Activated CD8-positive, alpha-beta T cell treated with anti-CD3 and anti-CD28 coated beads for 36 hours (primary cell): ENCODE measurements at regions of chr22 and their contacts with region 1.

Region 1: DNA sequence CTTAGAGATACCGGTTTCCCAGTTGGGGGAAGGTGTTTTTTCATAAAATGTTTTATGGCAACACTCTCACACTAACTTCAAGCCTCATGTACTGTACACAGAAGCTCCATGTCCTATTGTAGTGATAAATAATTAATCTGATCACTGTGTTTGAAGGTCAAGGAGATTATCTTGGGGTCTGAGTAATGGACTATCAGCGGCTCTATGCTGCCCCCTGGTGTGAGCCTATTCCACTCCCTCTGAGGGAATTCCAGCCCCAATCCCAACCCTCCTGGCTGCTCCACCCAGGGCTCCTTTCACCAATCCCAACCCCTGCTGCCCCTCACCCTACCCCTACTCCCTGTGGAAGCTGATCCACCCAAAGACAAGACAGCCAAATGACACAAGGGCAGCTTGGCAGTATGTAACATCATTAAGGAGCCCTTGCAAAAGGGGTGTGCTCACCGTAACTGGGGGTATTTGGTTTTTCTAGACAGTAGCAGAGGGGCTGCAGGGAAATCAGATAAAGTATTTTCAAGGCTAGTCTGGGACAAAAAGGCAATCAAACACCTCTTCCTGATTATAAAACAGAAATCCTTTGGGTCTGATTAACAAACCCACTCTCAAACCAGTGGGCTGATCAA is 22.3 kb downstream of the HPS4 start:
- DNase-seq: peak; percentile 56
- ATAC-seq: peak; percentile 27
- H3K4me3 Mint-ChIP-seq: no peak overlapping the region
- H3K27ac Mint-ChIP-seq: no peak overlapping the region
- H3K4me1 Mint-ChIP-seq: no peaks in the 10 kb centered on the region
- H3K27me3 Mint-ChIP-seq: no peaks in the 10 kb centered on the region
- CTCF ChIP-seq: peak; percentile 80

Region 2: GRCh38 chr22:26336773-26337172 is 124.5 kb before region 1 on chr22:
- CTCF ChIA-PET with region 1: no interaction called
- POLR2A ChIA-PET with region 1: no interaction called
- intact Hi-C with region 1: no loop called
- DNase-seq: no peak
- ATAC-seq: no peak
- H3K4me3 Mint-ChIP-seq: no peak overlapping the region
- H3K27ac Mint-ChIP-seq: no peak overlapping the region
- H3K4me1 Mint-ChIP-seq: no peaks in the 10 kb centered on the region
- H3K27me3 Mint-ChIP-seq: peaks cover 32% of the 10 kb centered on the region
- CTCF ChIP-seq: no peak

Region 3: DNA sequence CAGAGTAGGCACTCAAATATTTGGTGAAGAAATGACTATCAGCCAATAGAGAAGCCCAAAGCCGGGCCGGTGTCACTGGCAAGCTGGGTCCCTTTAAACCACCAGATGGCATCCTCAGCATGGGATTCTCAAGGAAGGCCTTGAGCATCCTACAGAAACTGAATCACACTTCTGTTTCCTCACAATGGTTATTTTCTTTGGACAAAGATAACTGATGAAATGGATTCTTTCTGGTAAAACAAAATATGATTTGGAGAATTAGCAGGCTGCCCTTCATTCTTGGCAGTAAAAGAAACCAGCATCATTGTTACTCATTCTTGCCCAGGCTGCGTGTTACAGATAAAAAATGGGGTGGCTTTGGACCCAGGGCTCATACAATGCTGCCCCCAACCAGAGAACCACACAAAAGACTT is 62.6 kb before region 1 on chr22:
- CTCF ChIA-PET with region 1: interaction called, 56 read pairs
- POLR2A ChIA-PET with region 1: no interaction called
- intact Hi-C with region 1: loop called (anchors 5 kb)
- DNase-seq: peak; percentile 77
- ATAC-seq: peak; percentile 85
- H3K4me3 Mint-ChIP-seq: no peak overlapping the region
- H3K27ac Mint-ChIP-seq: no peak overlapping the region
- H3K4me1 Mint-ChIP-seq: peaks cover 3% of the 10 kb centered on the region
- H3K27me3 Mint-ChIP-seq: peaks cover 8% of the 10 kb centered on the region
- CTCF ChIP-seq: peak; percentile 66

Region 4: DNA sequence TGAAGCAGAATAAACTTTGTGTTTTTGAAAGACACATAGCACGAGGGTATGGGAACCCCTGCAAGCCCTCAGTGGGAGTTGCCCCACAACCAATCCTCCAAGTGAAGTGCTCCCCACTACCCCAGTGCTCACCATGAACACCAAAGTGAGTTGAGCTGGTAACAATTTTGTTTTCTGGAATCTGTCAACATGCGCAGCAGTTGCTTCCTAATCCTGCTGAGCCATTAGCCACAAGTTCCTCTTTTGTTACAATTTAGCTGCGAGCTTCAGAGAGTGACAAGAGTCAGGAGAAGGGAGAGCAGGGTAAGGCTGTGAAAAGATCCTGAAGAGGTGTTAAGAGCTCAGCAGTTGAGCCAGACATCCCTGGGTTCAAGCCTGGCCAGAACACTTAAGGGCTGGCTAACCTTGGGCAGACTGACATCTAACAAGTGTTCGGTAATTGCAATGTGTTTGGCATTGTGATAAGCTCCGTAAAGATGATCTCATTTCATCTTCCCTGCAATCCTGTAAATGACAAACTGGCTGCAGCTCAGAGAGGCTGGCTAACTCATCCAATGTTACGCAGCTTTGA is 56.4 kb before region 1 on chr22:
- CTCF ChIA-PET with region 1: interaction called, 56 read pairs
- POLR2A ChIA-PET with region 1: no interaction called
- intact Hi-C with region 1: no loop called
- DNase-seq: no peak
- ATAC-seq: no peak
- H3K4me3 Mint-ChIP-seq: no peak overlapping the region
- H3K27ac Mint-ChIP-seq: no peak overlapping the region
- H3K4me1 Mint-ChIP-seq: peaks cover 12% of the 10 kb centered on the region
- H3K27me3 Mint-ChIP-seq: peaks cover 6% of the 10 kb centered on the region
- CTCF ChIP-seq: no peak

Region 5: GRCh38 chr22:26445577-26446275 is 15.6 kb before region 1 on chr22:
- CTCF ChIA-PET with region 1: interaction called, 13 read pairs
- POLR2A ChIA-PET with region 1: interaction called, 4 read pairs
- intact Hi-C with region 1: no loop called
- DNase-seq: no peak
- ATAC-seq: no peak
- H3K4me3 Mint-ChIP-seq: no peak overlapping the region
- H3K27ac Mint-ChIP-seq: no peak overlapping the region
- H3K4me1 Mint-ChIP-seq: no peaks in the 10 kb centered on the region
- H3K27me3 Mint-ChIP-seq: no peaks in the 10 kb centered on the region
- CTCF ChIP-seq: no peak

Region 6: DNA sequence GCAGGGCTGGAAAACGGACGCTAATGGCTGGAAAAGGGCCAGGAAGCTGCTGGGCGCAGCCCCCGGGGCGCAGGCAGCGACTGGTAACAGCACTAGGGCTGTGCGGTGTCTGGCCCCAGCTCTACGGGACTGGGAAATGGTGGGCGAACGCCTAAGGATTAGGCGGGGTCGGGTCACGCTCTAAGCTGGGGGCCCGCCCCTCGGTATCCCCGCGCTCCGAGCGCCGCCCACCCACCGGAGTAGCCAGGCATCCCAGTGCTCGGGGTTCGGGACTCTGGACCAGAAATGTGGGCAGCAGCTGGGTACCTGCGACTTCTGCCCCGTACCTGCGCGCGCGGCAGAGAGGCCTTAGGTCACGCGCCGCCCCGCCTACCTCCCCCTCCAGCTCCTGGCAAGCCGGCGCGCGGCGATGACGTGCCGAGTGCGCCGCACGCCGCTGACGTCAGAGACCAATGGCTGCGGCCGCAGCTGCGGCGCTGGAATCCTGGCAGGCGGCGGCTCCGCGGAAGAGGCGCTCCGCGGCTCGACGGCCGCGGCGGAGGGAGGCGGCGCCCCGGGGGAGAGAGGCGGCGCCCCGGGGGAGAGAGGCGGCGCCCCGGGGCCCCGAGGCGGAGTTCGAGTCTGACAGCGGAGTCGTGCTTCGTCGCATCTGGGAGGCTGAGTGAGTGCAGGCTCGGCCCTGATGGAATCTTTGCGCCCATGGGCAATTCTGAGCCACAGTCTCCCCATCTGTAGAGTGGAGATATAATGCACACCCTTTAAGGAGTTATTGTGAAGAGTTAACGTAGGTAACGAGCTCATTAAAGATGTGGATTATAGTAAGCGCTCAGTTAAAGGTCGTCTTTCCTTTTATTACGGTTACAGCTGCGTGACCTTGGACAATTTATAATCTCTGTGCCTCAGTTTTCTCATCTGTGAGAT is 22.4 kb after region 1 on chr22 and contains the starts of genes HPS4 and SRRD:
- CTCF ChIA-PET with region 1: interaction called, 48 read pairs
- POLR2A ChIA-PET with region 1: interaction called, 5 read pairs
- intact Hi-C with region 1: no loop called
- DNase-seq: peak; percentile 92
- ATAC-seq: peak; percentile 81
- H3K4me3 Mint-ChIP-seq: peak within 1 kb of the TSS; percentile 94
- H3K27ac Mint-ChIP-seq: peak within 1 kb of the TSS; percentile 98
- H3K4me1 Mint-ChIP-seq: peaks cover 61% of the 10 kb centered on the region
- H3K27me3 Mint-ChIP-seq: no peaks in the 10 kb centered on the region
- CTCF ChIP-seq: no peak
- total RNA-seq, gene HPS4: 51.8 to 53.5 TPM
- total RNA-seq, gene SRRD: 24.8 to 26.3 TPM

Region 7: GRCh38 chr22:26835929-26836528 is 374.7 kb after region 1 on chr22:
- CTCF ChIA-PET with region 1: no interaction called
- POLR2A ChIA-PET with region 1: no interaction called
- intact Hi-C with region 1: no loop called
- DNase-seq: peak; percentile 82
- ATAC-seq: peak; percentile 70
- H3K4me3 Mint-ChIP-seq: no peak overlapping the region
- H3K27ac Mint-ChIP-seq: no peak overlapping the region
- H3K4me1 Mint-ChIP-seq: no peaks in the 10 kb centered on the region
- H3K27me3 Mint-ChIP-seq: no peaks in the 10 kb centered on the region
- CTCF ChIP-seq: peak; percentile 94